Activated T-helper 2 cell treated with anti-CD3 and anti-CD28 coated beads, Interferon-gamma antibody, Interleukin-2, Interleukin-4, amounts not matched to agents 10 μg/mL and 5 μg/mL and 100 μg/mL, durations not matched to agents 14 hours and 24 hours and 36 hours (primary cell): ENCODE measurements at regions of chr3 and their contacts with region 1.

Region 1: DNA sequence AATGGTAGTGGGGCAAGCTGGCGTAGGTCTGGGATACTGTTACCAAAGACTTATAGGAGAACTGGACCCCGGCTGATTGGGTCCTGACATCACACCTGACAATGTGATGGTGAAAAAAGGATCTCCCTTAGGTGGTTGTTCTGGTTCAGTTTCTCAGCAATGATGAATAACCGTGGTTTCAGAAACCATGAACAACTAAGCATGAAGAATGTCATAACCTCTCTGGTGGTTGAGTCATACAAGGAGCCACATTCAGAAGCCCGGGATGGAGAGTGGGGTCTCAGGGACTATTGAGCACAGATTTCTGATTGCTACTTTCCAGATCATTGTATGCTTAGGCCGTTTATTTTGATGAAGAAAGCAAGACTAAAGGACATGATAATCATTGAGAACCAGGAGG is 17.4 kb downstream of the GPR160 start:
- DNase-seq: no peak
- H3K4me3 Mint-ChIP-seq: no peak overlapping the region
- H3K27ac Mint-ChIP-seq: peak overlapping the region; percentile 24
- H3K4me1 Mint-ChIP-seq: peaks cover 46% of the 10 kb centered on the region
- H3K27me3 Mint-ChIP-seq: no peaks in the 10 kb centered on the region

Region 2: GRCh38 chr3:169863458-169863899 is 191.7 kb before region 1 on chr3:
- intact Hi-C with region 1: loop called (anchors 1 kb)
- DNase-seq: peak; percentile 60
- H3K4me3 Mint-ChIP-seq: no peak overlapping the region
- H3K27ac Mint-ChIP-seq: no peak overlapping the region
- H3K4me1 Mint-ChIP-seq: peaks cover 11% of the 10 kb centered on the region
- H3K27me3 Mint-ChIP-seq: peaks cover 25% of the 10 kb centered on the region

Region 3: DNA sequence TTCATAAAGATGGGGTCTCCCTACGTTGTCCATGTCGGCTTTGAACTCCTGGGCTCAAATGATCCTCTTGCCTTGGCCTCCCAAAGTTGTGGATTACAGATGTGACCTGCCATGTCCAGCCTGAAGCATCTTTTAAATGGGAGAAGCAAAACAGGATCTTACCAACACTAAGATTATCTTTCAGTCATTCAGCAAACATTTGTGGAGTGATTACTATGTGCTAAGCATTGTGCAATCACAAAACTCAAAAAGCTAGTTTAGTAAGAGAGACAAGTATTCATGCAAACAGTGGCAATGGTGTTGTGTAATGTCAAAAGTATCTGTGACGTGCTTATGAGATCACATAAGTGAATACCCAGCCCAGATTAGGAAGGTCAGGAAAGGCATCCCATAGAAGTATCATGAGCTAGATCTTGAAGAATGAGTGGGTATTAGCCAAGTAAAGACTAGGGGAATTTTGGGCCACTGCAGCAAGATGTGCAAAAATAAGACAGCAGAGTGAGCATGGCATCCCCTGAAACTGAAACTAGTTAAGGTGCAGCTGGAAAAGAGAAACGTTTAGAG is 56.6 kb before region 1 on chr3:
- intact Hi-C with region 1: loop called (anchors 2 kb)
- DNase-seq: no peak
- H3K4me3 Mint-ChIP-seq: no peak overlapping the region
- H3K27ac Mint-ChIP-seq: peak overlapping the region; percentile 74
- H3K4me1 Mint-ChIP-seq: peaks cover 27% of the 10 kb centered on the region
- H3K27me3 Mint-ChIP-seq: no peaks in the 10 kb centered on the region

Region 4: GRCh38 chr3:170037463-170038433 is 17.5 kb before region 1 on chr3 and contains the start of gene GPR160:
- intact Hi-C with region 1: loop called (anchors 1 kb)
- DNase-seq: peak; percentile 75
- H3K4me3 Mint-ChIP-seq: peak within 1 kb of the TSS; percentile 84
- H3K27ac Mint-ChIP-seq: peak within 1 kb of the TSS; percentile 33
- H3K4me1 Mint-ChIP-seq: peaks cover 22% of the 10 kb centered on the region
- H3K27me3 Mint-ChIP-seq: no peaks in the 10 kb centered on the region
- total RNA-seq, gene GPR160: 7.7 and 9.6 TPM in 2 replicates

Region 5: DNA sequence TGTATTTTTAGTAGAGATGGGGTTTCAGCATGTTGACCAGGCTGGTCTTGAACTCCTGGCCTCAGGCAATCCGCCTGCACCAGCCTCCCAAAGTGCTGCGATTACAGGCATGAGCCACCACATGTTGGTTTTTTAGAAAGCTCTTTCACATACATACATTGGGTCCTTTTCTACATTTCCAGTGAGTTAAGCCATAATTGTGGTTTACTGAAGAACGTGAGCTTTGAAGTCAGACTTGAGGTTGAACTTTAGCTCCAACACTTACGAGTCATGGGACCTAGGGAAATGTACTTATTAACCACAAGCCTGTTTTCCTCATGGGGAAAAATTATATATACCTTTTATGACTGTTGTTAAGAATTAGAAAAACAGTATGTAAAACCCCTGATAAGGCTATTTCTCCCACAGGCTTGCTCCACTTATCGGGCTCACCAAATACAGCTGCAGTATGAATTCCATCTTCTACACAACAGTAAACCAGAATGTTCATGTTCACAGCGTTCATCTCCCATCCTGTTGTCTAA is 21.6 kb after region 1 on chr3:
- intact Hi-C with region 1: loop called (anchors 2 kb)
- DNase-seq: no peak
- H3K4me3 Mint-ChIP-seq: no peak overlapping the region
- H3K27ac Mint-ChIP-seq: no peak overlapping the region
- H3K4me1 Mint-ChIP-seq: peaks cover 13% of the 10 kb centered on the region
- H3K27me3 Mint-ChIP-seq: no peaks in the 10 kb centered on the region

Region 6: DNA sequence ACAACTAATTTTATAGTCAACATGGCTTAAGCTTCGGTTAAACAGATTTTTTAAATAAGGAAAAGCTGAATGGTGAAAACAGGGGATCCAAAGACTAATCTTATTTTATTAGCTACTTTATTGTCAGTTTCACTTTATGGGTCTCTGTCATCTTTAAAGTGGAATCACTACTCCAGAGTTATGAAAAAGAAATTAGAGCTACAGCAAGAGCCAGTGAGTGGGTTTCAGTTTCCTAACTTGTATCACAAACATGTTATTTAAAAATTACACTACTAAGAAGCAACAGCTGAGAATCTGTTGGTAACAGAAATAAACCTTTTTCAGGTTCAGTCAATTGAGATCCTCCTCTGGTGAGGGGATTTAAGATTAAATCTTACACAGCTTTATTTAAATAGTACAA is 116.4 kb after region 1 on chr3:
- intact Hi-C with region 1: loop called (anchors 2 kb)
- DNase-seq: no peak
- H3K4me3 Mint-ChIP-seq: peak overlapping the region; percentile 33
- H3K27ac Mint-ChIP-seq: peak overlapping the region; percentile 67
- H3K4me1 Mint-ChIP-seq: peaks cover 38% of the 10 kb centered on the region
- H3K27me3 Mint-ChIP-seq: no peaks in the 10 kb centered on the region

Region 7: GRCh38 chr3:170257145-170257544 is 201.9 kb after region 1 on chr3:
- intact Hi-C with region 1: loop called (anchors 5 kb)
- DNase-seq: no peak
- H3K4me3 Mint-ChIP-seq: no peak overlapping the region
- H3K27ac Mint-ChIP-seq: peak overlapping the region; percentile 54
- H3K4me1 Mint-ChIP-seq: peaks cover 37% of the 10 kb centered on the region
- H3K27me3 Mint-ChIP-seq: no peaks in the 10 kb centered on the region

Region 8: GRCh38 chr3:170368921-170369320 is 313.7 kb after region 1 on chr3:
- intact Hi-C with region 1: no loop called
- DNase-seq: no peak
- H3K4me3 Mint-ChIP-seq: no peak overlapping the region
- H3K27ac Mint-ChIP-seq: no peak overlapping the region
- H3K4me1 Mint-ChIP-seq: peaks cover 12% of the 10 kb centered on the region
- H3K27me3 Mint-ChIP-seq: no peaks in the 10 kb centered on the region